ENCODE measurements at regions of chr18 and their contacts with region 1.

Region 1: DNA sequence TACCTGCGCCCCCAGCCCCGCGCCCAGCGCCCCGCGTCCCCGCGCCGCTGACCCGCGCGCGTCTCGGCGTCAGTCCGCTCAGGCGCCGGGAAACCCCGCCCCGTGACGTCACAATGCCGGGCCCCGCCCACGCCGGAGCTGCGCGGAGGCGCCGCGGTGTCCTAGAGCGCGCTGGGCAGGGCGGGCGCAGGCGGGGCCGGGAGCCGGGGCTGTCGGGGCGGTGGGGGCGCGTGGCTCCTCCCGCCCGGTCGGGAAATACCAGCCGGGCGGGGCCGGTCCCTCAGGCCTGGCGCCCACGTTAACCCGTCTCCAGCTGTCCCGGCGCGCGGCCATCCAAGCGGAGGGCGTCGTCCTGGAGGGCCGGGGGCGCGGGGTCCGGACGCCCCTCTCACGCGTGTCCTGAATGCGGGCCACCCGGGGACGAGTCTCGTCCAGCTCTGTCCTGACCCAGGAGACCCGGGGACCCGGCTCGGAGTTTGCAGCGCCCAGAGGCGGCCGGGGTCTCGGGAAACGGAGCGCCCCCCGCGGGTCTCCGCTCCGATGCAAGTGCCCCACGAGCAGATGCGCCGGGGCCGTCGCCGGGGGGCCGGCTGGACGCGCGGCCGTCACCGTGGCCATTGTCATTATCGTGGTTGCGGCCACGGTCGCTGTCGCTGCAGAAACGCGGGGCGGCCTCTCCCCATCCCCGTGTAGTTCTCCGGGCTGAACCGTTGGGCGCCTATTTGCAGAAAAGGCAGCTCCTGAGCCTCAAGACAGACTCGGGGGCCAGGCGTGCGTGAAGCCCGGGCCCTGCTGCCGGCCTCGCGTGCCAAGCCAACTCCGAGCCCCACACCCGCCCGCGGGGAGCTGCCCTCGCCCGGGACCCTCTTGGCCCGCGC is at the start of gene SLC66A2:
- DNase-seq: peak; percentile 93 to 96
- ATAC-seq: peak; percentile 90 to 96 (median 93)
- H3K4me3 ChIP-seq: peak within 1 kb of the TSS; percentile 57 to 95 (median 86)
- H3K27ac ChIP-seq: peak within 1 kb of the TSS; percentile 41 to 93 (median 86)
- H3K4me1 ChIP-seq: peaks cover 6 to 53% (median 36%) of the 10 kb centered on the region in 9 donors
- H3K27me3 ChIP-seq: no peaks in the 10 kb centered on the region
- CTCF ChIP-seq: peak in 1 of 9 donors; percentile 17
- total RNA-seq, gene SLC66A2: 21.4 to 31.0 (median 23.5) TPM

Region 2: GRCh38 chr18:79393635-79394533 is 557.9 kb before region 1 on chr18:
- intact Hi-C with region 1: loop called in 1 of 10 experiments (anchors 10 kb)
- DNase-seq: peak; percentile 96 to 97
- ATAC-seq: peak; percentile 71 to 86 (median 83)
- H3K4me3 ChIP-seq: peak overlapping the region; percentile 24 to 65 (median 51)
- H3K27ac ChIP-seq: peak overlapping the region; percentile 90 to 98 (median 94)
- H3K4me1 ChIP-seq: peaks cover 7 to 44% (median 28%) of the 10 kb centered on the region in 9 donors
- H3K27me3 ChIP-seq: peaks cover 0 to 76% (median 0%) of the 10 kb centered on the region in 7 donors
- CTCF ChIP-seq: no peak

Region 3: GRCh38 chr18:79765491-79766245 is 186.1 kb before region 1 on chr18:
- intact Hi-C with region 1: no loop called
- DNase-seq: no peak
- ATAC-seq: no peak
- H3K4me3 ChIP-seq: no peak overlapping the region
- H3K27ac ChIP-seq: no peak overlapping the region
- H3K4me1 ChIP-seq: no peaks in the 10 kb centered on the region
- H3K27me3 ChIP-seq: peaks cover 0 to 11% (median 0%) of the 10 kb centered on the region in 7 donors
- CTCF ChIP-seq: no peak

Region 4: DNA sequence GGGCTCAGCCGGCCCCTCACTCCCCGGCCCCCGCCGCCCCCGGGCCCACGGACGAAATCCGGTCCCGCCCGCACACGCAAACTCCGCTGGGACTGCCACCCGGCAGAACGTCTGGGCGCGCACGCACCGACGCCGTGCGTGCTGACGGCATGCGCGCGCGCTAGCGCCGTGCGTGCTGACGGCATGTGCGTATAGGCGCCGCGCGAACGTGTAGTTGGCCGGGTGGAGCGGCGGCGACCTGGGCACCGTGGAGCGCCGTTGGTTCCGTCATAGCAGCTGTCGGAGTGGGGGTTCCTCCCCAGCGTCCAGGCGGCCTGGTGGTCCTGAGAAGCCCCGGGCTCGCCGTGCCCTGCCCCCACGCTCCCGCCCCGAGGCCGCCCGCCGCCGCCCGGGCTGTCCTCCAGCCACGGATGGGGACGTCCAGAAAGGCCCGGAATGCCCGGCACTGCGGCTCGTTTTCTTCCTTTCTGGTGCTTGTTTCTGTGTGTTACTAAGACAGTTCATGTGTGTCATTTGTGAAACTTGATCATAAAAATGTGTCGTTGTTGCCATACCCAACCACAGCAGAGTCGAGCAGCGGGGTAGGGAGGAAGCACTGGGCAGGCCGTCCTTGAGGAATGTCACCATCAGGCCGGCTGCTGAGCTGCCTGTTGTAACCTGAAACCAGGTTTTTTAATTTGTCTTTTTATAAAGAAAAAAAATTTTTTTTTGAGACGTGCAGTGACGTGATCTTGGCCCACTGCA is 36.8 kb after region 1 on chr18 and contains the start of gene TXNL4A:
- intact Hi-C with region 1: loop called in 2 of 10 experiments (anchors 2 to 5 kb)
- DNase-seq: peak; percentile 86 to 88
- ATAC-seq: peak; percentile 98 to 99 (median 98)
- H3K4me3 ChIP-seq: peak within 1 kb of the TSS; percentile 70 to 98 (median 93)
- H3K27ac ChIP-seq: peak within 1 kb of the TSS; percentile 92 to 99 (median 96)
- H3K4me1 ChIP-seq: peaks cover 9 to 35% (median 25%) of the 10 kb centered on the region in 9 donors
- H3K27me3 ChIP-seq: no peaks in the 10 kb centered on the region
- CTCF ChIP-seq: no peak
- total RNA-seq, gene TXNL4A: 63.3 to 115 (median 87.2) TPM